Activated T-helper 1 cell treated with anti-CD3 and anti-CD28 coated beads, Interleukin-12 subunit alpha, Interleukin-12 subunit beta, Interleukin-2, Interleukin-4 antibody, amounts not matched to agents 30 ng/mL and 10 ng/mL and 1 ng/mL, durations not matched to agents 14 hours and 24 hours and 36 hours (primary cell): ENCODE measurements at regions of chr1 and their contacts with region 1.

Region 1: GRCh38 chr1:154974063-154974807 is at the start of gene CKS1B:
- DNase-seq: peak; percentile 95
- H3K4me3 Mint-ChIP-seq: no peak within 1 kb of the TSS
- H3K27ac Mint-ChIP-seq: no peak within 1 kb of the TSS
- H3K4me1 Mint-ChIP-seq: peaks cover 36% of the 10 kb centered on the region
- H3K27me3 Mint-ChIP-seq: no peaks in the 10 kb centered on the region
- total RNA-seq, gene CKS1B: 151 and 158 TPM in 2 replicates

Region 2: DNA sequence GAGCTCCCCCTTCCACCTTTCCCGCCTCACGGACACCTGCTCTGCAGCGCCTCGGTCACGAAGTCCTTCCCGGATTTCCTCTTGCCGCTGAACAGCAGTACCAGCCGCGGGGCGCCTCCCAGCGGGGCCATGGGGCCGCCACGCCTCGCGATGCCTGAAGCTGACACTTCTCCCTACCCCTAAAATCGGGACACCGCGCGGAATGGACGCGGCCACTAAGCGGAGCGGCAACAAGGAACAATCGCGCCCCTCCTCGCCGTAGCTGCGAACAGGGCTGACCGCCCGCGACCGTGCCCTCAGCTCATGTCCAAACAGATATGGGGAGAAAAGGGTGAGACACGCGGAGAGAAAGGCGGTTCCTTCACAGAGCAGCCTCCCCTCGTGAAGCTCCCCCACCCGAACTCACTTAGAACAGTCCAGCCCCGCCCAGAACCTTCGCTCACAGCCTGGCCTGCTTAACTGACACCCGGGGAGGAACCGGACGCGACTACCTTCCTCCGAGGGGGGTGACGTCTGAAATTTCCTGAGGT is 37.6 kb before region 1 on chr1 and contains the start of gene PMVK:
- intact Hi-C with region 1: loop called (anchors 1 kb)
- DNase-seq: peak; percentile 92
- H3K4me3 Mint-ChIP-seq: peak within 1 kb of the TSS; percentile 93
- H3K27ac Mint-ChIP-seq: peak within 1 kb of the TSS; percentile 95
- H3K4me1 Mint-ChIP-seq: peaks cover 53% of the 10 kb centered on the region
- H3K27me3 Mint-ChIP-seq: no peaks in the 10 kb centered on the region
- total RNA-seq, gene PMVK: 42.5 and 43.3 TPM in 2 replicates

Region 3: GRCh38 chr1:154961497-154962262 is 12.6 kb before region 1 on chr1 and contains the start of gene PYGO2:
- intact Hi-C with region 1: loop called (anchors 1 kb)
- DNase-seq: peak; percentile 82
- H3K4me3 Mint-ChIP-seq: peak within 1 kb of the TSS; percentile 96
- H3K27ac Mint-ChIP-seq: peak within 1 kb of the TSS; percentile 93
- H3K4me1 Mint-ChIP-seq: peaks cover 36% of the 10 kb centered on the region
- H3K27me3 Mint-ChIP-seq: peaks cover 2% of the 10 kb centered on the region
- total RNA-seq, gene PYGO2: 34.7 and 35.0 TPM in 2 replicates

Region 4: GRCh38 chr1:155050560-155051341 is 76.5 kb after region 1 on chr1 and contains the start of gene ADAM15:
- intact Hi-C with region 1: loop called (anchors 2 kb)
- DNase-seq: peak; percentile 79
- H3K4me3 Mint-ChIP-seq: peak within 1 kb of the TSS; percentile 88
- H3K27ac Mint-ChIP-seq: peak within 1 kb of the TSS; percentile 88
- H3K4me1 Mint-ChIP-seq: peaks cover 28% of the 10 kb centered on the region
- H3K27me3 Mint-ChIP-seq: no peaks in the 10 kb centered on the region
- total RNA-seq, gene ADAM15: 82.9 and 86.8 TPM in 2 replicates

Region 5: DNA sequence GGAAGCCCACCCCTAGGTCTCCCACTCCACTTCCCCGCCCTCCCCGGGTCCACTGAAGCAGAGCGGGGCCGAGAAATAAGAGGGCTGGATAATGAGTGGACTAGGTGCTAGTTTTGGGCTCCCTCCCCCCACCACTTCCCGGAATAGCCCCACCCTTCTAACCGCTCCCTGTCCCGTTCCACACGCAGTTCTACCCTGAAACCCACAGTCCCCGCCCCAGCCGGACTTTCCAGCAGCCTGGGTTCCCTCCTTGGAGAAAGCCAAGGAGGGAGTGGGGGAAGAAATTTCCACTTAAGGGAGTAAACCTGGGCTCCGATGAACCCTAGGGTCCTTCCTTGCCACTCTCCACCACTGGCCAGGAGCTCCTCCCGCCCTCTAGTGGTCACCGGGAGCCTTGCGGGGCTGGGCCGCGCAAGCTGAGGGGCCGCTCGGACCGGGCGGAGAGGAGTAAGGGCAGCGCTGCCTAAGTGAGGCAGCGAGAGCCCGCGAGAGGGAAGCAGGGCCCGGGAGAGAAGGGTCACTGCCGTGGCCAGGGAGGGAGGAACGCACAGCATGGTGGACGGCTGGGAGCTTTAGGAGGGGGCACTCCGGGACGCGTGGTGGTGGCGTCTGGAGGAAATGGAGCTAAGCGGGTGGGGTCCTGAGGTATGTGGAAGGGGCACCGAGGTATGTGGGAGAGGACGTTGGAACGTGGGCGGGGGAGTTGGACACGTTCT is 219.2 kb after region 1 on chr1:
- intact Hi-C with region 1: loop called (anchors 5 kb)
- DNase-seq: peak; percentile 72
- H3K4me3 Mint-ChIP-seq: peak overlapping the region; percentile 88
- H3K27ac Mint-ChIP-seq: peak overlapping the region; percentile 97
- H3K4me1 Mint-ChIP-seq: peaks cover 39% of the 10 kb centered on the region
- H3K27me3 Mint-ChIP-seq: no peaks in the 10 kb centered on the region